Sciatic nerve (tissue), 2 donors: ENCODE measurements at regions of chr6 and their contacts with region 1.

Region 1: GRCh38 chr6:42783876-42784642 is 2.2 kb downstream of the BICRAL start:
- DNase-seq: no peak
- ATAC-seq: no peak

Region 2: DNA sequence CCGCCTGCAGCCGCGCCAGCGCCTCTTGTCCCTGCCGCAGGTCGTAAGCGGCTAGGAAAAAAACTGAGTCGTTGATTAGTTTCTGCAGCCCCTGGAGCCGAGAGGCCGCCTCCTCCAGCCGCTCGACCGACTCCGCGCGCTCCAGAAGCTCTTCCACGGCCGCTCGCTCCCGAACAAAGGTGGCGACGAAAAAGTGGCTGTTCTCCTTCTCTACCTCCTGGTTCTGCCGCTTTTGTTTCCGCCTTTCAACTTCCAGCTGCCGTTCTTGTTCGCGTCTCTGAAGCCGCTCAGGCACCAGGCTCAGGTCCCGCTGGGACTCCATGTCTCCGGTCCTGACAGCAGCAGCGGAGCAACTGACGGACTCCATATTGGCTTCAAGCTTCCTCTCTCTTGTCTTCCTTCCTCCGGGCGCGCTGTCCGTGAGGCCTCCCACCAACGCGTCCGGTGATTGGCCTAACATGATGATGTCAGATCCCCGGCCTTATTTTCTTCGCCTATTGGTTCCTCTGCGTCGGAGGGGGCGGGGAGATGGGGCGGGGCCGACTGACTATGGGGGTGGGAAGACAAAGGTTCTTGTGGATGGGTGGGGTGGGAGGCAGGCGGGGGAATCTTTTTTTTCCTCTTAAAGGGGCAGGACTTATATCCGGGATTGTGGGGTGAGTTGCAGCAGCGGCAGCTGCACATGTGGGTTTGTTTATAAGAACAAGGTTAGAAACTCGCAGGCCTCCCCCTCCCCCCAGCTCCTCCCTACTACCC is 38.2 kb before region 1 on chr6 and contains the start of gene TBCC:
- intact Hi-C with region 1: loop called (anchors 2 kb)
- DNase-seq: peak; percentile 96
- ATAC-seq: peak; percentile 95
- total RNA-seq, gene TBCC: 12.7 TPM

Region 3: GRCh38 chr6:43021270-43022047 is 237.4 kb after region 1 on chr6 and contains the start of gene RRP36:
- intact Hi-C with region 1: loop called (anchors 5 kb)
- DNase-seq: peak; percentile 87
- ATAC-seq: peak; percentile 91
- total RNA-seq, gene RRP36: 34.6 TPM